ENCODE measurements at regions of chr12 and their contacts with region 1.

Region 1: DNA sequence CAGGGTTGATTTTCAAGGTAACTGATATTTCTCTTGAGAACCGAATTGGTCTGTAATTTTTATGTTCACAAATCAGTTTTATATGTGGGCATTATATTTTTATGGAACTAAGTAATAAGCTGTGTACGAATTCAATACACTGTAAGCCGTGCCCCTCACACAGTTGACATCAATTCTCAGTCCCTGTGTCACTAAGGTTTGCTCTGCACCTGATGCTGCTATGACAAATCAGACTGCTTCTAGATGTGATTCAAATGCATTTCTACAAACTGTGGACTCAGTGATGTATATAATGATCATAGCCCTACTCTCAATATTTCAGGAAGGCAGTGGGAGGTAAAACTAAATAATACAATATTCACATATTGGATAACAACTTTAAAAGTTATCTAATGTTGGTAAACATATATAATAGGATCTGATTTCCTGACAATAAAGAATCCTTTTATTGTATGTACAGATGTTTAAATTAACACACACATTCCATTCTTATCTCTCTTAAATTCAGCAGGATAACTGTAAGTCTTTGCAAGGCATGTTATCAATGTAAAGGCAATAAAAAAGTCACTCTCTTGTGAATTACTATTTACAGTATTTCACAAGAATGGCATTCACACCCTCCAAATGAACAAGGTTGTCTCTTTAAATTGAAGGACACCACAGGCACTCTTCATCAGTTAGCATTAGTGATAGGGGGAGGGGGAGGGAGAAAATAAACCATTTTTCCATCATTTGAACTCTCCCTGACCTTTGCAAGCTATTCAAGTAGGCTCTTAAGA is 87.2 kb upstream of the SOX5 start:
- DNase-seq: no peak
- H3K4me3 ChIP-seq: no peak overlapping the region
- H3K27ac ChIP-seq: no peak overlapping the region
- H3K4me1 ChIP-seq: peaks cover 0 to 10% of the 10 kb centered on the region in 2 donors
- H3K27me3 ChIP-seq: no peaks in the 10 kb centered on the region
- CTCF ChIP-seq: no peak

Region 2: GRCh38 chr12:24012528-24012927 is 24.1 kb before region 1 on chr12:
- intact Hi-C with region 1: loop called (anchors 1 kb)
- DNase-seq: no peak
- H3K4me3 ChIP-seq: no peak overlapping the region
- H3K27ac ChIP-seq: no peak overlapping the region
- H3K4me1 ChIP-seq: no peaks in the 10 kb centered on the region
- H3K27me3 ChIP-seq: no peaks in the 10 kb centered on the region
- CTCF ChIP-seq: peak in 1 of 3 experiments; percentile 23

Region 3: DNA sequence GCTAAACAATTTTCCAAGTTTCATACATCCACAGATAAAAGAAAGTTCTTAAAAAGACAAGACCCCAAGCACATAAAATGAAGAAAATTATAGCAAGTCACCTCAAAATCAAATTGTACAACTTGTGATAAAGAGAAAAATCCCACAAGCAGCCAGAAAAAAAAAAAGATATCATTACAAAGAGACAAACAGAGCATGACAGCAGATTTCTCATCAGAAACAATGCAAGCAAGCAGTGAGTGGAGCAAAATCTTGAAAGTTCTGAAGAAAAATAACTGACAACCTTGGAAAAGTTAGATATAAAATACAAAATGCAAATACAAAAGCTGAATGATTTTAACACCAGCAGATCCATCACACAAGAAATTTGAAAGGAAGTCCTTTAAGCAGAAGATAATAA is 107.3 kb after region 1 on chr12:
- intact Hi-C with region 1: no loop called
- DNase-seq: no peak
- H3K4me3 ChIP-seq: no peak overlapping the region
- H3K27ac ChIP-seq: no peak overlapping the region
- H3K4me1 ChIP-seq: no peaks in the 10 kb centered on the region
- H3K27me3 ChIP-seq: no peaks in the 10 kb centered on the region
- CTCF ChIP-seq: no peak

Measured in ascending aorta (tissue), 2 donors.